ENCODE measurements at regions of chr4 and their contacts with region 1.

Region 1: GRCh38 chr4:108080747-108081146 is 88.0 kb downstream of the LEF1 start:
- DNase-seq: peak; percentile 73
- H3K4me3 Mint-ChIP-seq: peak overlapping the region; percentile 74
- H3K27ac Mint-ChIP-seq: peak overlapping the region; percentile 93
- H3K4me1 Mint-ChIP-seq: peaks cover 79% of the 10 kb centered on the region
- H3K27me3 Mint-ChIP-seq: no peaks in the 10 kb centered on the region

Region 2: DNA sequence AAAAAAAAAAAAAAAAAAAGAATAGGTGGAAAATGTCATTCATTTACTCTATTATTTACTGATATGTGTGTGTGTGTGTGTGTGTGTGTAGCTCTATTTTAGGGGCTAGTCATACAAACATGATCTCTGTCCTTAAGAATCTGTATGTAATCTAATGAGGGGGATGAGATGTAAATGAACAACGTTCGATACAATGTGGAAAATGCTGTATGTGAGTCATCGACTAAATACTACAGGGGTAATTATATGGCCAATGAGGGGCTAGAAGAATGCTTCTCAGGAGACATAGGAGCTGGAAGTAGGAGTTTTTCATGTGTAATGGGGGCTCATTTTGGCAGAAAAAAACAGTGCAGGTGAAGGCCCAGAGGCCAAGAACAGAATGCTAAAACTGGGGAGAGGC is 46.1 kb after region 1 on chr4:
- CTCF ChIA-PET with region 1: no interaction called
- intact Hi-C with region 1: loop called (anchors 5 kb)
- DNase-seq: no peak
- H3K4me3 Mint-ChIP-seq: peak overlapping the region; percentile 10
- H3K27ac Mint-ChIP-seq: peak overlapping the region; percentile 92
- H3K4me1 Mint-ChIP-seq: peaks cover 82% of the 10 kb centered on the region
- H3K27me3 Mint-ChIP-seq: no peaks in the 10 kb centered on the region

Region 3: GRCh38 chr4:108360754-108361445 is 280.2 kb after region 1 on chr4:
- CTCF ChIA-PET with region 1: no interaction called
- intact Hi-C with region 1: no loop called
- DNase-seq: no peak
- H3K4me3 Mint-ChIP-seq: no peak overlapping the region
- H3K27ac Mint-ChIP-seq: no peak overlapping the region
- H3K4me1 Mint-ChIP-seq: peaks cover 63% of the 10 kb centered on the region
- H3K27me3 Mint-ChIP-seq: no peaks in the 10 kb centered on the region

Measured in activated naive CD4-positive, alpha-beta T cell treated with anti-CD3 and anti-CD28 coated beads for 36 hours (primary cell).